GM13977 (cell line): ENCODE measurements at regions of chr10 and their contacts with region 1.

Region 1: DNA sequence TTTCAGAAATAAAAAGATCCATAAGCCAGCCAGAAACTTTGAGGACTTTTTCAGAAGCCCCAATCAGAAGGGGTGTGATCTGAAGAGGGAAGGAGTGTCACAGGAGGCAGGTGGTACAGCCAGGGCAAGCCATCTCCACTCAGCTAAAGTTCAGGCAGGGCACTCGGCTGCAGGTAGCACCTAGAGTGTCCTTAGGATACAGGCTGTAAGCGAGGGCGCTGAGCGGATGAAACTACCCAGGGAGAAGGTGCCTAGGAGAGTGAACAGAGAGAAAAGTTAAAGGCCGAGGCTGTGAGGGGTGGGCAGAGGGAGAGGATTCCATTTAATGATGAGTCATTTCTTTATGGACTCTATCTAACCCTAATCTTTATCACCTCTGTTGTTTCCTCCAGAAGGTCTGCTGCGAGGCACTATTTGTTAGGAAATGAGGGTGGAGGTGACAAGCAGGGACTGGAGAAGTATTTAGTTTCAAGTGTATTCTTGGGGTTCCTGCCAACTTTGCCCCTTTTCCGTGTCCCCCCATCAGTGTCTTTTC is 29.8 kb upstream of the ZCCHC24 start:
- DNase-seq: no peak
- CTCF ChIP-seq: no peak

Region 2: DNA sequence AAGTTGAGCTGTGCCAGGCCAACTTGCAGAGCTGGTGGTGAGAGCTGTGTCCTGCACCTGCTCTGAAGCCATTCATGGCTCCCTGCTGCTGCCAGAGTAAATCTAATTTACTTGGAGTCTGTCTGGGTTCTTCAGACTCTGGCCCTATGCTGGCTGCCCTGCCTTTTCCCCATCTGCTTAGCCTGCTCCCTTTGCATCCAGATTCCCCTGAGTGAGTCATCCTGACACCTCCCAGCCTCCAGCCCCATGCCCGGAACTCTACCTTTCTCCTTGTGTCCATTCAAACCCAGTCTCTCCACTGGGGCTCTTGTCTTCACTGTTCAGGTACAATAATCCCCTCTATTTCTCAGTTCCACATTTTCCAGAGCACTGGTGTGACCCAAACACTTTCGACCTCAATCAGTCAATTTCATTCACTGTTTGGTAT is 840.8 kb before region 1 on chr10:
- in situ Hi-C with region 1: no loop called
- DNase-seq: no peak
- CTCF ChIP-seq: no peak

Region 3: DNA sequence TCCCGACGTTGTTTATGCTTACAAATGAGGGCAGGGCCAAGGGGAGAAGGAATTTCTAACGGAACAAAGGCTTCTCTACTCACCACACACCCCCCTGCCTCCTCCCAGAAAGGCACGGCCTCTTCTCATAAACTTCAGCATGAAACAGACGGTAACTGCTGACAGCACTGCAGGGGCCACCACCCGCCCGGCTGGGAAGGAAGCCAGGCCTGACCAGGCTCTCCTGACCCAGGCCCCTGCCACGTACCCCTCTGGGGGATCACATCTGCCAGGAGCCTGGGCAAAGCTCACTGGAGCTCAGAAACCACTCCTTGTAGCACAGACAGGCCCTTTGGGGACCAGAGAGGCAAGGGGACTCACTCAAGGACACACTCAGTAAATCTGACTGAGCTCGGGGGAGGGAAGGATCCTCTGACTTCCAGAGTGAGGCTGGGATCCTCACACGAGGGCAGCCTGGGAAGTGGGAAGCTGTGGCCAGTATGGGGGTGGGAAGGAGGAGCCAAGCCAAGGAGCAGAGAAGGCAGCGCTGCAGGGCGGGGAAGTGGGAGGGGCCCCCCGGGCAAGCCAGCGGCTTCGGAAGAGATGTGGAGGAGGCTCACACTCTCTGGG is 75.9 kb before region 1 on chr10:
- in situ Hi-C with region 1: loop called (anchors 5 kb)
- DNase-seq: no peak
- CTCF ChIP-seq: no peak